Activated CD4-positive, alpha-beta T cell treated with anti-CD3 and anti-CD28 coated beads, Interleukin-2, amount 10 ng/mL, durations not matched to agents 24 days and 14 days (primary cell): ENCODE measurements at regions of chr6 and their contacts with region 1.

Region 1: GRCh38 chr6:36851149-36851614 is 11.9 kb upstream of the CPNE5 start:
- DNase-seq: peak; percentile 84
- H3K4me3 Mint-ChIP-seq: no peak overlapping the region
- H3K27ac Mint-ChIP-seq: no peak overlapping the region
- H3K4me1 Mint-ChIP-seq: peaks cover 10% of the 10 kb centered on the region
- H3K27me3 Mint-ChIP-seq: no peaks in the 10 kb centered on the region

Region 2: GRCh38 chr6:36765594-36766398 is 85.4 kb before region 1 on chr6:
- intact Hi-C with region 1: loop called (anchors 1 kb)
- DNase-seq: peak; percentile 96
- H3K4me3 Mint-ChIP-seq: no peak overlapping the region
- H3K27ac Mint-ChIP-seq: no peak overlapping the region
- H3K4me1 Mint-ChIP-seq: peaks cover 30% of the 10 kb centered on the region
- H3K27me3 Mint-ChIP-seq: no peaks in the 10 kb centered on the region

Region 3: GRCh38 chr6:36780442-36781177 is 70.6 kb before region 1 on chr6:
- intact Hi-C with region 1: loop called (anchors 5 kb)
- DNase-seq: no peak
- H3K4me3 Mint-ChIP-seq: no peak overlapping the region
- H3K27ac Mint-ChIP-seq: no peak overlapping the region
- H3K4me1 Mint-ChIP-seq: peaks cover 7% of the 10 kb centered on the region
- H3K27me3 Mint-ChIP-seq: peaks cover 17% of the 10 kb centered on the region

Region 4: DNA sequence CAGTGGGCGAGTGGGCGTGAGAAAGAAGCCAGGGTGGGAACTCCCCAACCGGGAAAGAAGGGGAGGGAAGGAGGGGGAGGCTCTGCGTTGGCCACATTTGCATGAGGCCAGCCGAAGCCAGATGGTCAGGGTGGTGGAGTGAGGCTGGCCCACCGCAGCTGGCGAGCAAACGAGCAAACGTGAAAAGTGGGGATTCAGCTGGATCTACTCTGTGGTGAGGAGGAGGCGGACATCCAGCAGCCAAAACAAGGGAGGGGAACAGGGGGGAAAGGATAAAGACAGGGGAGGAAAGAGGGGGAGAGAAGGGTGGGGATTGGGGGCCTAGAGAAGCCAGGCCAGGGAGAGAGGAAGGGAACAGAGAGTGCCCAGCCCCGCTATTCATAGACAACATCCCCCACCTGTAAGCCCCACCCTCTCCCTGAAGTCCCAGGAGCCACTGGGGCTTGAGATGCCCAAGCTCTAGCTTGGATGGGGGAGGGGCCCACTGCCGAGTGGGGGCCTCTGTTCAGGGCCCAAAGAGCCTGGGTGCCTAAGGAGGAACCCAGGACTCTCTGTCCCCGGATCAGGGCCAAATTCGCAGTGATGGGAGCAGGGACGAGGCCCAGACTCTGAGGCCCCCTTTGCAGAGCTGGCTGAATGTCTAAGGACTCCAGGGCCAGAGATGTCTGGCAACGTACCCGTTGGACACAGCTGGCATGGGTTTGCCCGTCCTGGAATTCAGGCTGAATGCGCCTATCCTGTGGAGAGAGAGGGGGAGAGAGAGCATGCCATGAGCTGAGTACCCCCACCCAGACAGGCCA is 57.1 kb before region 1 on chr6:
- intact Hi-C with region 1: no loop called
- DNase-seq: no peak
- H3K4me3 Mint-ChIP-seq: no peak overlapping the region
- H3K27ac Mint-ChIP-seq: no peak overlapping the region
- H3K4me1 Mint-ChIP-seq: peaks cover 5% of the 10 kb centered on the region
- H3K27me3 Mint-ChIP-seq: peaks cover 14% of the 10 kb centered on the region